ENCODE measurements at regions of chr3 and their contacts with region 1.

Region 1: DNA sequence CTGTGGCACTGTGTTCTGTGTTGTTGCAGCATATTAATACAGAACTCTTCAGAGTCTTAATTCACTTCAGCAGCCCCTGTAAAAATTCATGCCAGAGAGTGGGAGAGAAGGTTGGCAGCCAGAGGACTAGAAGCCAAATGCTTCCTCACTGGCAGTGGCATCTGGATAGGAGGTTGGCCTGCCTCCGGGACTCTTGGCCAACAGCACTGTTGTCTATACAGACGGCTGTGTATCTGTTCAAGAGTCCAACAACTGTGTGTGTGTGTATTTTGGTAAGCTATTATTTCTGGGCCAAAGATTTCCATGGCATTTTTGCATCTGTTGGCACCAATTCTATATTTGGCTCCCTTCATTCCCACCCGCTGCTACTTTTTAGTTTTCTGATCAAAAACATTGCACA is 156.0 kb upstream of the SOX2 start:
- DNase-seq: peak; percentile 24 to 72 (median 59)
- ATAC-seq: peak; percentile 55 to 89 (median 84)
- H3K4me3 ChIP-seq: no peak overlapping the region
- H3K27ac ChIP-seq: no peak overlapping the region
- H3K4me1 ChIP-seq: peaks cover 0 to 15% (median 0%) of the 10 kb centered on the region in 12 donors
- H3K27me3 ChIP-seq: no peaks in the 10 kb centered on the region
- CTCF ChIP-seq: no peak
- POLR2A ChIP-seq: no peak

Region 2: GRCh38 chr3:181362378-181362777 is 193.3 kb before region 1 on chr3:
- intact Hi-C with region 1: loop called in 1 of 10 experiments (anchors 10 kb)
- DNase-seq: peak in 2 of 5 donors; percentile 14 to 28
- ATAC-seq: peak; percentile 75 to 94 (median 92)
- H3K4me3 ChIP-seq: no peak overlapping the region
- H3K27ac ChIP-seq: peak overlapping the region in 11 of 12 donors; percentile 3 to 78 (median 57)
- H3K4me1 ChIP-seq: peaks cover 0 to 14% (median 2%) of the 10 kb centered on the region in 12 donors
- H3K27me3 ChIP-seq: no peaks in the 10 kb centered on the region
- CTCF ChIP-seq: no peak
- POLR2A ChIP-seq: no peak

Region 3: GRCh38 chr3:181442066-181442465 is 113.6 kb before region 1 on chr3:
- intact Hi-C with region 1: no loop called
- DNase-seq: no peak
- ATAC-seq: no peak
- H3K4me3 ChIP-seq: no peak overlapping the region
- H3K27ac ChIP-seq: no peak overlapping the region
- H3K4me1 ChIP-seq: no peaks in the 10 kb centered on the region
- H3K27me3 ChIP-seq: no peaks in the 10 kb centered on the region
- CTCF ChIP-seq: no peak
- POLR2A ChIP-seq: no peak

Measured in heart left ventricle (tissue), 16 donors.